Uterus (tissue), 4 donors: ENCODE measurements at regions of chr18 and their contacts with region 1.

Region 1: GRCh38 chr18:53268455-53268854 is 928.5 kb downstream of the DCC start:
- DNase-seq: no peak
- H3K4me3 ChIP-seq: no peak overlapping the region
- H3K27ac ChIP-seq: no peak overlapping the region
- H3K4me1 ChIP-seq: no peaks in the 10 kb centered on the region
- H3K27me3 ChIP-seq: no peaks in the 10 kb centered on the region
- CTCF ChIP-seq: no peak
- POLR2A ChIP-seq: no peak

Region 2: GRCh38 chr18:53056064-53056463 is 212.4 kb before region 1 on chr18:
- intact Hi-C with region 1: loop called (anchors 10 kb)
- DNase-seq: no peak
- H3K4me3 ChIP-seq: no peak overlapping the region
- H3K27ac ChIP-seq: no peak overlapping the region
- H3K4me1 ChIP-seq: no peaks in the 10 kb centered on the region
- H3K27me3 ChIP-seq: no peaks in the 10 kb centered on the region
- CTCF ChIP-seq: no peak
- POLR2A ChIP-seq: no peak

Region 3: GRCh38 chr18:53115876-53116585 is 152.4 kb before region 1 on chr18:
- intact Hi-C with region 1: no loop called
- DNase-seq: no peak
- H3K4me3 ChIP-seq: no peak overlapping the region
- H3K27ac ChIP-seq: no peak overlapping the region
- H3K4me1 ChIP-seq: no peaks in the 10 kb centered on the region
- H3K27me3 ChIP-seq: no peaks in the 10 kb centered on the region
- CTCF ChIP-seq: no peak
- POLR2A ChIP-seq: no peak

Region 4: DNA sequence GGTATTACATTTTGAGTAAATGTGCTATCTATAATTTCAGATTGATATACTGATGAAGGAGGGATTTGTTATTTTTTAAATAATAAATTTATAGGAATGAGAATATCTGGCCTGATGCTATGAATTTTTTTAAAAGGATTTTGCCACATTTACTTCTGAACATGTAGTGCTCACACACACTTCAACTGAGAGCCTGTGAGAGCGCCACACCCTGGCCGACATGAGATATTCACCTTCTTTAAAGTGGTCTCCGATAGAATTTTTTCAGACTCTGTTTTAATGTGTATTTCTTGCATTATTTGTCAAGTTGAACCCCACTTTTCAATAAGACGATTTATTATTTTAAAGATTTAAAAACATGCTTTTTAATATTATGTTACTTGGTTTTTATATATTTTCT is 115.2 kb before region 1 on chr18:
- intact Hi-C with region 1: no loop called
- DNase-seq: no peak
- H3K4me3 ChIP-seq: no peak overlapping the region
- H3K27ac ChIP-seq: no peak overlapping the region
- H3K4me1 ChIP-seq: no peaks in the 10 kb centered on the region
- H3K27me3 ChIP-seq: no peaks in the 10 kb centered on the region
- CTCF ChIP-seq: no peak
- POLR2A ChIP-seq: no peak

Region 5: DNA sequence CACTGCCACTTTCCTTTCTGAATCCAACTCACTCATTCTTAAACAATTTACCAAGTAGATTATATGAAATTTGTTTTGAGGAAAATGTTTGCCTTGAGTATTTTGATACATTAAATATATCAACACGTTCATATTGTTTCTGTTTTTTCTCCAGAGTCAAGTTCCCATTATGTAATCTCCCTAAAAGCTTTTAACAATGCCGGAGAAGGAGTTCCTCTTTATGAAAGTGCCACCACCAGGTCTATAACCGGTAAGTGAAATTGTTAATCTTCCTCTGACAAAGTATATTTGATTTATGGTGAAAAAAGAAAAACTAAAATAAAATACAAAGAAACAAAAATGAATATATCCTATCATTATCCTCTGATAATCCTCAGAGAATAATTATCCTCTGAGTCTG is 117.4 kb after region 1 on chr18:
- intact Hi-C with region 1: no loop called
- DNase-seq: no peak
- H3K4me3 ChIP-seq: no peak overlapping the region
- H3K27ac ChIP-seq: no peak overlapping the region
- H3K4me1 ChIP-seq: no peaks in the 10 kb centered on the region
- H3K27me3 ChIP-seq: no peaks in the 10 kb centered on the region
- CTCF ChIP-seq: no peak
- POLR2A ChIP-seq: no peak

Region 6: GRCh38 chr18:53610957-53611356 is 342.5 kb after region 1 on chr18:
- intact Hi-C with region 1: no loop called
- DNase-seq: no peak
- H3K4me3 ChIP-seq: no peak overlapping the region
- H3K27ac ChIP-seq: no peak overlapping the region
- H3K4me1 ChIP-seq: no peaks in the 10 kb centered on the region
- H3K27me3 ChIP-seq: no peaks in the 10 kb centered on the region
- CTCF ChIP-seq: no peak
- POLR2A ChIP-seq: no peak